Activated CD4-positive, alpha-beta memory T cell treated with anti-CD3 and anti-CD28 coated beads for 36 hours (primary cell): ENCODE measurements at regions of chr19 and their contacts with region 1.

Region 1: GRCh38 chr19:42325273-42325895 is at the start of gene MEGF8:
- DNase-seq: peak; percentile 99
- H3K4me3 Mint-ChIP-seq: peak within 1 kb of the TSS; percentile 79
- H3K27ac Mint-ChIP-seq: peak within 1 kb of the TSS; percentile 32
- H3K4me1 Mint-ChIP-seq: peaks cover 19% of the 10 kb centered on the region
- H3K27me3 Mint-ChIP-seq: peaks cover 13% of the 10 kb centered on the region
- total RNA-seq, gene MEGF8: 6.0 to 7.2 TPM

Region 2: GRCh38 chr19:42075616-42076379 is 249.6 kb before region 1 on chr19 and contains the start of gene ZNF574:
- CTCF ChIA-PET with region 1: no interaction called
- POLR2A ChIA-PET with region 1: no interaction called
- intact Hi-C with region 1: loop called (anchors 1 kb)
- DNase-seq: peak; percentile 99
- H3K4me3 Mint-ChIP-seq: peak within 1 kb of the TSS; percentile 99
- H3K27ac Mint-ChIP-seq: peak within 1 kb of the TSS; percentile 99
- H3K4me1 Mint-ChIP-seq: peaks cover 35% of the 10 kb centered on the region
- H3K27me3 Mint-ChIP-seq: no peaks in the 10 kb centered on the region
- total RNA-seq, gene ZNF574: 12.2 to 13.2 TPM

Region 3: DNA sequence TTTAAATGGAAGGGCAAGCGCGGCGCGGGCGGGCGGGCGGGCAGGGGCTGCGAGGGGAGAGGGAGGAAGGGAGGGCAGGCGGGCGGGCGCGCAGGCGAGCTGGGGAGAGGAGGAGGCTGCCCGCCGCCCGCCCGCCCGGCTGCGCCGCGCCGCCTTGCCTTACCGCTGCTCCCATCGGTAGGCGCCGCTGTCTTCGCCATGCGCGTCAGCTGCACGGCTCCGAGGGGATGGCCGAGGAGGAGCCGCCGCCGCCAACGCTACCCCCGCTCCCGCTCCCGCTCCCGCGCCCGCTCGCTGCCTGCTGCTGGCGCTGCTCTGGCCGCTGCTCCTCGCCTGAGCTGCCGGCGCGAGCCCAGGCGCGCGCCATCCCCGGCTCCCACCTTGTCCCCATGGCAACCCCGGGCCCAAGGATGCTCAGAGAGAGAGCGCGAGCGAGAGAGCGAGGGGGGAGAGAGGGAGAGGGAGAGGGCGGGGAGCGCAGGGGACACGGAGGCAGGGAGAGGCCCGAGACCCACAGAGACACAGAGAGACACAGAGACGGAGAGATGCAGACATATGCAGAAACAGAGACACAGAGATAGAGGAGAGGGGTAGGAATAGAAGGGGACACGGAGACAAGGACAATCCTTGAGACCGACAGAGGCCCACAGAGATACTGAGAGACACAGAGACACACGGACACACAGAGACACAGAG is 148.2 kb before region 1 on chr19:
- CTCF ChIA-PET with region 1: no interaction called
- POLR2A ChIA-PET with region 1: no interaction called
- intact Hi-C with region 1: loop called (anchors 1 kb)
- DNase-seq: peak; percentile 85
- H3K4me3 Mint-ChIP-seq: no peak overlapping the region
- H3K27ac Mint-ChIP-seq: no peak overlapping the region
- H3K4me1 Mint-ChIP-seq: peaks cover 14% of the 10 kb centered on the region
- H3K27me3 Mint-ChIP-seq: peaks cover 11% of the 10 kb centered on the region

Region 4: DNA sequence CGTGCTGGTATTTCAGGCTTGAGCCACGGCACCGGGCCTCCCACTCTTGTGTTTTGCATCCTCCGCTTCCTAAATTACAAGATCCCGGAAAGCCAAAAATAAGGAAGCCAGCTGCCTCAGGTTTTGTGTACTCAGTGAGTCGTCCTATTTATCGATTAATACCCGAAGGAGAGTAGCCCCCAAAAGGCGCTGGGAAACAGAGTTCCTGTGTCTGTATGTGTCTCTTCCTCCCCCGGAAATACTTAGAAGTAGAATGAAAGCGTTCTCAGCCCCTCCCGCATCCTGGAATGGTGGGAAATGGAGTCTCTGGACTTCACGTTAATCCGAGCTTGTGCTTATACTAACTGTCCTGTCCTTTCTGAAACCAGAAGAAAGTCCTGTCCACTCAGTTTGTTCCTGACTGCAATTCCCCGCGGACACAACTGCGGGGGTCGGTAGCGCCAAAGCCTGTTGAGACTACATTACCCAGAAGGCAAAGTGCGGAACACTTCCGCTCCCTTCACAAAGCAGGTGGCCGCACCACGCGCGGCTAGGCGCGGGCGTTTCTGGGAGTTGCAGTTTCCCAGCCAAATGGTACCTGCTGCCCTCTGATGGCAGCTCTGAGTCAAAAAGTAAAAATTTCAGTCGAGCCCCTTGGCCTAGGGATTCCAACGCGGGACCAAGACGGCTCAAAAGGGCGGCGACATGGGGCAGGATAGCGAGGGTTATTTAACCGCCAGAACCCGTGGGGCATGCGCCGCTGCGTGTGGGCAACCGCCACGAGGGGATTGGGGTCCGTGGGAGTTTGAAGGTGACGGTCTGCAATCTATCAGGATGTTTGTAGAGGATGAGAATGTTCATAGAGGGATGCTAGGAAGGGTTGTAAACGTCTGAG is 80.8 kb before region 1 on chr19:
- CTCF ChIA-PET with region 1: interaction called, 4 read pairs
- POLR2A ChIA-PET with region 1: no interaction called
- intact Hi-C with region 1: loop called (anchors 1 kb)
- DNase-seq: peak; percentile 96
- H3K4me3 Mint-ChIP-seq: peak overlapping the region; percentile 92
- H3K27ac Mint-ChIP-seq: peak overlapping the region; percentile 94
- H3K4me1 Mint-ChIP-seq: peaks cover 42% of the 10 kb centered on the region
- H3K27me3 Mint-ChIP-seq: no peaks in the 10 kb centered on the region

Region 5: GRCh38 chr19:42271861-42272534 is 53.4 kb before region 1 on chr19:
- CTCF ChIA-PET with region 1: no interaction called
- POLR2A ChIA-PET with region 1: no interaction called
- intact Hi-C with region 1: no loop called
- DNase-seq: no peak
- H3K4me3 Mint-ChIP-seq: no peak overlapping the region
- H3K27ac Mint-ChIP-seq: no peak overlapping the region
- H3K4me1 Mint-ChIP-seq: peaks cover 44% of the 10 kb centered on the region
- H3K27me3 Mint-ChIP-seq: no peaks in the 10 kb centered on the region

Region 6: GRCh38 chr19:42301656-42302203 is 23.7 kb before region 1 on chr19 and contains the start of gene PRR19:
- CTCF ChIA-PET with region 1: no interaction called
- POLR2A ChIA-PET with region 1: interaction called, 3 read pairs
- intact Hi-C with region 1: loop called (anchors 1 kb)
- DNase-seq: peak; percentile 41
- H3K4me3 Mint-ChIP-seq: peak within 1 kb of the TSS; percentile 86
- H3K27ac Mint-ChIP-seq: peak within 1 kb of the TSS; percentile 85
- H3K4me1 Mint-ChIP-seq: peaks cover 25% of the 10 kb centered on the region
- H3K27me3 Mint-ChIP-seq: no peaks in the 10 kb centered on the region
- total RNA-seq, gene PRR19: 0.61 to 0.81 TPM

Region 7: GRCh38 chr19:42401365-42402303 is 76.2 kb after region 1 on chr19:
- CTCF ChIA-PET with region 1: no interaction called
- POLR2A ChIA-PET with region 1: no interaction called
- intact Hi-C with region 1: no loop called
- DNase-seq: peak; percentile 78
- H3K4me3 Mint-ChIP-seq: peak overlapping the region; percentile 71
- H3K27ac Mint-ChIP-seq: peak overlapping the region; percentile 45
- H3K4me1 Mint-ChIP-seq: peaks cover 35% of the 10 kb centered on the region
- H3K27me3 Mint-ChIP-seq: no peaks in the 10 kb centered on the region

Region 8: GRCh38 chr19:42423462-42424344 is 98.3 kb after region 1 on chr19:
- CTCF ChIA-PET with region 1: interaction called, 3 read pairs
- POLR2A ChIA-PET with region 1: no interaction called
- intact Hi-C with region 1: loop called (anchors 1 kb)
- DNase-seq: peak; percentile 97
- H3K4me3 Mint-ChIP-seq: peak overlapping the region; percentile 92
- H3K27ac Mint-ChIP-seq: peak overlapping the region; percentile 87
- H3K4me1 Mint-ChIP-seq: peaks cover 37% of the 10 kb centered on the region
- H3K27me3 Mint-ChIP-seq: no peaks in the 10 kb centered on the region